Naive thymus-derived CD8-positive, alpha-beta T cell (primary cell): ENCODE measurements at regions of chrX and their contacts with region 1.

Region 1: DNA sequence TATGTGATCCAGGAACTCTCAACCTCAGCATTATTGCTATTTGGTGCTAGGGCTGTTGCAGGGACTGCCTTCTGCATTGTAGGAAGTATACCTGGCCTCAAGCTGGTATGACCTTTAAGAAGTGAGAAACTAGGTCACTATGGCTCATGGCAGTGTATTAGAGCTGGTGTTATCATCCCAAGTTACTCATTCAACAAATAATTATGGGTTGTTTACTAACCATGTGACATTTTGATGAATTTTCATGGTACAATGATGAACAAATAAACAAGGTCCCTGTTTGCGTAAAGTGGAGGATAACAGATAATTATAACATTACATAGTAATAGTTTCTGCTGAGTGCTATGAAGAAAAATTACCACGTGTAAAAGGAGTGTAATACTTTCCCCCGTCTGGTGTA is 25.0 kb upstream of the KLHL4 start:
- DNase-seq: no peak
- ATAC-seq: no peak
- H3K4me3 Mint-ChIP-seq: no peak overlapping the region
- H3K27ac Mint-ChIP-seq: no peak overlapping the region
- H3K4me1 Mint-ChIP-seq: no peaks in the 10 kb centered on the region
- H3K27me3 Mint-ChIP-seq: no peaks in the 10 kb centered on the region

Region 2: GRCh38 chrX:87528487-87528886 is 35.9 kb after region 1 on chrX:
- POLR2A ChIA-PET with region 1: interaction called, 10 read pairs
- DNase-seq: no peak
- ATAC-seq: no peak
- H3K4me3 Mint-ChIP-seq: no peak overlapping the region
- H3K27ac Mint-ChIP-seq: no peak overlapping the region
- H3K4me1 Mint-ChIP-seq: no peaks in the 10 kb centered on the region
- H3K27me3 Mint-ChIP-seq: no peaks in the 10 kb centered on the region